CD4-positive, alpha-beta T cell (primary cell): ENCODE measurements at regions of chr3 and their contacts with region 1.

Region 1: GRCh38 chr3:30475038-30475808 is 131.2 kb upstream of the TGFBR2 start:
- DNase-seq: peak in 3 of 14 experiments; percentile 24 to 45 (median 34)
- ATAC-seq: peak; percentile 89
- H3K4me3 ChIP-seq: no peak overlapping the region
- H3K4me3 Mint-ChIP-seq: peak overlapping the region; percentile 15
- H3K27ac ChIP-seq: no peak overlapping the region
- H3K27ac Mint-ChIP-seq: peak overlapping the region; percentile 5
- H3K4me1 ChIP-seq: no peaks in the 10 kb centered on the region
- H3K4me1 Mint-ChIP-seq: peaks cover 47% of the 10 kb centered on the region
- H3K27me3 ChIP-seq: no peaks in the 10 kb centered on the region
- H3K27me3 Mint-ChIP-seq: no peaks in the 10 kb centered on the region
- CTCF ChIP-seq: no peak

Region 2: DNA sequence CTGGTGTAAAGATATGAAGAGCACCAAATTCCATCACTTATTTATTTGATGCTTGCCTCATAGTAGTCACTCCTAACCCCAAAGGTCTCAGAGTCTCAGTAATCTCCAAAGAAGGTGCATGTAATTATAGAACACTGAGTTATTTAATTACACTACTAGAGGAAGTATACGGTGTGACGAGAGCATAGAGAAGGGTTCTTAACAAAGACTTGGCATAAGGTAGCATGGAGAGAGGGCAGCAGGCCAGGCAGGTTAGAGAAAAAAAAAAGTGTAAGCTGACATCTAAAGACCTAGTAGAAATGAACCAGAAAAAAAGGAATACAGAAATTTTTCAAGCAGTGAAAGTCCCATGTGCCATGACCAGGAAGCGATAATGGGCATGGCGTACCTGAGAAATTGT is 82.1 kb before region 1 on chr3:
- CTCF ChIA-PET with region 1: no interaction called
- POLR2A ChIA-PET with region 1: no interaction called
- intact Hi-C with region 1: no loop called
- DNase-seq: no peak
- ATAC-seq: no peak
- H3K4me3 ChIP-seq: no peak overlapping the region
- H3K4me3 Mint-ChIP-seq: no peak overlapping the region
- H3K27ac ChIP-seq: no peak overlapping the region
- H3K27ac Mint-ChIP-seq: no peak overlapping the region
- H3K4me1 ChIP-seq: no peaks in the 10 kb centered on the region
- H3K4me1 Mint-ChIP-seq: no peaks in the 10 kb centered on the region
- H3K27me3 ChIP-seq: no peaks in the 10 kb centered on the region
- H3K27me3 Mint-ChIP-seq: no peaks in the 10 kb centered on the region
- CTCF ChIP-seq: no peak

Region 3: DNA sequence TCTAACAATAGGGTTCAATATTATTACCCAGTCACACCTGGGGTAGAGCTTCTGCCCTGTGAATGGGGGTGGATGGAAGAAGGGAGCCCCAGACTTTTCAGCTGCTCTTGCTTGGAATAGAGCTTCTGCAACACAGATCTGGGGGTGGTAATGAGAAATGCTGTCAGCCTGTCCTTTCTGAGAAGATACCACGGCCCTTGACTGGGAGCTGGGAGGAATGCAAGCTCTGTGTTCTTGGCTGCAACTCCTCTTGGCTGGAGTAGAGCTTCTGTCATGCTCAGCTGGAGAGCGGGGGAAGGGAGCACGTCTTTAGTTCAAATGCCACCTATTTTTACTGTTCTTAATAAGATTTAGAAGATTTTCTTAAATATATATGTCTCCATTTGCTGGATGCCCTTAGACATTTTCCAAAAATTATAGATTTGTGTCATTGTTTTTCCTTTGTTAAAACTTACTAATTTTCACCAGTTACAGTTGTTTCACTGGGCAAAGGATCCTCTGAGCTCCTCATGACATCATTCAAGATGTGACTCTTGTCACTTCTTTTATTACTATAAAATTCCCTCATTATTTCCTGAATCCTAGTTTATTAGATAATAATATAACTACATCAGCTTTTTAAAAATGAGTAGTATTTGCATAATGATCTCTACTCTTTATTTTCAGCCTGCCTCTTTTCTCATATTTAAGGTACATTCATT is 48.8 kb before region 1 on chr3:
- CTCF ChIA-PET with region 1: no interaction called
- POLR2A ChIA-PET with region 1: no interaction called
- intact Hi-C with region 1: loop called in 1 of 2 experiments (anchors 5 kb)
- DNase-seq: no peak
- ATAC-seq: no peak
- H3K4me3 ChIP-seq: no peak overlapping the region
- H3K4me3 Mint-ChIP-seq: no peak overlapping the region
- H3K27ac ChIP-seq: no peak overlapping the region
- H3K27ac Mint-ChIP-seq: no peak overlapping the region
- H3K4me1 ChIP-seq: no peaks in the 10 kb centered on the region
- H3K4me1 Mint-ChIP-seq: no peaks in the 10 kb centered on the region
- H3K27me3 ChIP-seq: no peaks in the 10 kb centered on the region
- H3K27me3 Mint-ChIP-seq: no peaks in the 10 kb centered on the region
- CTCF ChIP-seq: no peak

Region 4: GRCh38 chr3:31166249-31166885 is 691.1 kb after region 1 on chr3:
- CTCF ChIA-PET with region 1: no interaction called
- POLR2A ChIA-PET with region 1: no interaction called
- intact Hi-C with region 1: no loop called
- DNase-seq: no peak
- ATAC-seq: no peak
- H3K4me3 ChIP-seq: no peak overlapping the region
- H3K4me3 Mint-ChIP-seq: no peak overlapping the region
- H3K27ac ChIP-seq: no peak overlapping the region
- H3K27ac Mint-ChIP-seq: no peak overlapping the region
- H3K4me1 ChIP-seq: peaks cover 3% of the 10 kb centered on the region
- H3K4me1 Mint-ChIP-seq: peaks cover 15% of the 10 kb centered on the region
- H3K27me3 ChIP-seq: no peaks in the 10 kb centered on the region
- H3K27me3 Mint-ChIP-seq: no peaks in the 10 kb centered on the region
- CTCF ChIP-seq: no peak